ENCODE measurements at regions of chr13 and their contacts with region 1.

Region 1: DNA sequence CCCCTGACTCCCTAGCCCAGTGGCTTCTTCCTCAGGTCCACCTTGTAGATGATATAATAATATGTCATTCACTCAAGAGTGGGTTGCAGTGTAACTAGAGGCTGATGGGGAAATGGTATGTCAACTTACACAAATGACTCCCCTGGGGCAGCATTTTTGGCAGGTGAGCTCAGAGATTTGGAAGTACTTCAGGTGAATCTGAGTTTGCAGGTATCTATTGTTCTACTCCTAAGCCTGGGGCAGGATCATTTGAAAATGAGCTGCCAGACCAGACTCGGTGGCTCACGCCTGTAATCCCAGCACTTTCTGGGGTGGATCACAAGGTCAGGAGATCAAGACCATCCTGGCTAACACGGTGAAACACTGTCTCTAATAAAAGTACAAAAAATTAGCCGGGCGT is 11.6 kb upstream of the CNMD start:
- DNase-seq: no peak
- ATAC-seq: no peak
- H3K4me3 Mint-ChIP-seq: no peak overlapping the region
- H3K27ac Mint-ChIP-seq: no peak overlapping the region
- H3K4me1 Mint-ChIP-seq: no peaks in the 10 kb centered on the region
- H3K27me3 Mint-ChIP-seq: peaks cover 7% of the 10 kb centered on the region

Region 2: DNA sequence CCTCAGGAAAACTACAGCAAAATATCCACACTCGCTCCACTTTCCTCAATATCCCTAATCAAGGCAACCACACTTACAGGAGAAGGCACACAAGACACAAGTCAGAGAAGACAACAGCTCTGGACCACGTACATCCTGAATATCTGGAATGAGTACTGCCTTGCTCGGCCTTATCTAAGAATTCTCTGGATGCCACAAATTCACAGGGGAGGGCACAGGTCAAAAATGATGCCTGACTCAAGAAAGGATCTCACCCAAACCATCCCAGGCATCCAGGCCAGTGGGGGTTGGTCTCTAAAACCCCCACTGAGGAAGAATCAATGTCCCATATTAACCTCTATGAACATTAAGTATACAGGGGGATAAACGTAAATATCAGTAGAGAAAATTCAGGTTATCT is 769.8 kb before region 1 on chr13:
- CTCF ChIA-PET with region 1: no interaction called
- POLR2A ChIA-PET with region 1: no interaction called
- intact Hi-C with region 1: no loop called
- DNase-seq: no peak
- ATAC-seq: no peak
- H3K4me3 Mint-ChIP-seq: no peak overlapping the region
- H3K27ac Mint-ChIP-seq: no peak overlapping the region
- H3K4me1 Mint-ChIP-seq: no peaks in the 10 kb centered on the region
- H3K27me3 Mint-ChIP-seq: peaks cover 5% of the 10 kb centered on the region

Region 3: DNA sequence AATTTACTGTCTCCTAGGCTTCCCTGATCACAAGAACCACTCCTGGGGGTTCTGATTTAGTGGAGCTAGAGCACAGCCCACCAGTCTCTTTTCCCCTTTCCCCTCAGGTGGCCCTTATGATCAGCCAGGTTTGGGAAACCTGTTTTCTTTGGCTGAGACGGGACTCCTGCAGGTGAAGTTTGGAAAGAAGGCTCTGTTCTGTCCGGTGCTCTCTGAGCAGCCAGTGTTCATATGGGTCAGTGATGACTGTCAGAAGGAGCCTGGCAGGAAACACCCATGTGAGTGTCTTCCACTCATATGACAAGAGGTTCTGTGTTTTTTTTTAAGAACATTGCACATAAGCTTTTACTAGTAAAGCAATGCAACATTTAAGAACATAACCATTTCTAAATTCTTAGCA is 16.1 kb before region 1 on chr13:
- CTCF ChIA-PET with region 1: no interaction called
- POLR2A ChIA-PET with region 1: no interaction called
- intact Hi-C with region 1: loop called in 1 of 2 experiments (anchors 2 kb)
- DNase-seq: no peak
- ATAC-seq: no peak
- H3K4me3 Mint-ChIP-seq: no peak overlapping the region
- H3K27ac Mint-ChIP-seq: no peak overlapping the region
- H3K4me1 Mint-ChIP-seq: peaks cover 5% of the 10 kb centered on the region
- H3K27me3 Mint-ChIP-seq: peaks cover 25% of the 10 kb centered on the region

Region 4: GRCh38 chr13:52804202-52804641 is 53.0 kb after region 1 on chr13:
- CTCF ChIA-PET with region 1: no interaction called
- POLR2A ChIA-PET with region 1: no interaction called
- intact Hi-C with region 1: no loop called
- DNase-seq: no peak
- ATAC-seq: no peak
- H3K4me3 Mint-ChIP-seq: no peak overlapping the region
- H3K27ac Mint-ChIP-seq: no peak overlapping the region
- H3K4me1 Mint-ChIP-seq: no peaks in the 10 kb centered on the region
- H3K27me3 Mint-ChIP-seq: peaks cover 14% of the 10 kb centered on the region

Measured in activated CD4-positive, alpha-beta T cell treated with anti-CD3 and anti-CD28 coated beads for 36 hours (primary cell).